ENCODE measurements at regions of chr5 and their contacts with region 1.

Region 1: GRCh38 chr5:101600614-101601013 is 695.5 kb downstream of the SLCO4C1 start:
- DNase-seq: no peak
- ATAC-seq: no peak
- H3K4me3 Mint-ChIP-seq: no peak overlapping the region
- H3K27ac Mint-ChIP-seq: no peak overlapping the region
- H3K4me1 Mint-ChIP-seq: no peaks in the 10 kb centered on the region
- H3K27me3 Mint-ChIP-seq: no peaks in the 10 kb centered on the region
- CTCF ChIP-seq: no peak

Region 2: GRCh38 chr5:101687349-101687985 is 86.9 kb after region 1 on chr5:
- CTCF ChIA-PET with region 1: no interaction called
- POLR2A ChIA-PET with region 1: no interaction called
- intact Hi-C with region 1: loop called (anchors 5 kb)
- DNase-seq: no peak
- ATAC-seq: no peak
- H3K4me3 Mint-ChIP-seq: no peak overlapping the region
- H3K27ac Mint-ChIP-seq: no peak overlapping the region
- H3K4me1 Mint-ChIP-seq: no peaks in the 10 kb centered on the region
- H3K27me3 Mint-ChIP-seq: no peaks in the 10 kb centered on the region
- CTCF ChIP-seq: no peak

Measured in activated B cell treated with CpG ODN at 0.5 μM for 24 hours (primary cell).